ENCODE measurements at regions of chr4 and their contacts with region 1.

Region 1: GRCh38 chr4:185358514-185358913 is 37.2 kb downstream of the LRP2BP start:
- DNase-seq: peak; percentile 27
- H3K4me3 ChIP-seq: no peak overlapping the region
- CTCF ChIP-seq: no peak

Region 2: DNA sequence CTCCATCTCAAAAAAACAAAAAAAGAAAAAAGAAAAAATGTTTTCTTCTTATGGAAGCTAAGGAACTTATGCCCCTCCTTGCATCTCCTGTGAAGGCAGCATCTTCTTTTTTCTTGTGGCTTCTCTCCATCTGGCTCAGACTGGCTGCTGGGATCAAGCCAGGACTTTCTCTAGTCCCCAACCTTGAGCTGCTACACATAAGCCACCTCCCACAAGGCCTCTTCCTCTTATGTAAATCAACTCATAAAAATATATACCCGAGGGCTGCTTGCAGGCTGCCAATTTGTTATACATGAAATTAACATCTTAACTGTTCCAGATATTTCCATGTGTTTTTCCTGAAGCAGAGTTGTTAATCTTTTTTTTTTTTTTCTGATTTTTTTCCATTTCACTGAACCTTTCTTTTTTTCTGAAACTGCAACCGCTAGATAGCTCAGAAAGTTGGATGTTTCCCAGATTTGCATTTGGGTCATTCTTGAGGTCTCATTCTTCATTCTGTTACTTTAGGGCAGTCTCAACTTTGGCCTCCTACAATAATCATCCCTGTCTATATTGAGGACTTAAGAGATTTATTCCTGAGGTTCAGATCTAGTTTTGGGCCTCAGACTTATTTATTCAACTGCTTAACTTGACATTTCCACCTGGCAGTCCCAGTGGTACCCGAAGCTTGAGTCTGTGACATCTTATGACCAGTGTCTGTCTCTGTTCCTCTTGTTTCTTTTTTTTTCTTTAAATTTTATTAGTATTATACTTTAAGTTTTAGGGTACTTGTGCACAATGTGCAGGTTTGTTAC is 138.8 kb before region 1 on chr4:
- in situ Hi-C with region 1: loop called (anchors 10 kb)
- DNase-seq: peak; percentile 76
- H3K4me3 ChIP-seq: no peak overlapping the region
- CTCF ChIP-seq: no peak

Region 3: DNA sequence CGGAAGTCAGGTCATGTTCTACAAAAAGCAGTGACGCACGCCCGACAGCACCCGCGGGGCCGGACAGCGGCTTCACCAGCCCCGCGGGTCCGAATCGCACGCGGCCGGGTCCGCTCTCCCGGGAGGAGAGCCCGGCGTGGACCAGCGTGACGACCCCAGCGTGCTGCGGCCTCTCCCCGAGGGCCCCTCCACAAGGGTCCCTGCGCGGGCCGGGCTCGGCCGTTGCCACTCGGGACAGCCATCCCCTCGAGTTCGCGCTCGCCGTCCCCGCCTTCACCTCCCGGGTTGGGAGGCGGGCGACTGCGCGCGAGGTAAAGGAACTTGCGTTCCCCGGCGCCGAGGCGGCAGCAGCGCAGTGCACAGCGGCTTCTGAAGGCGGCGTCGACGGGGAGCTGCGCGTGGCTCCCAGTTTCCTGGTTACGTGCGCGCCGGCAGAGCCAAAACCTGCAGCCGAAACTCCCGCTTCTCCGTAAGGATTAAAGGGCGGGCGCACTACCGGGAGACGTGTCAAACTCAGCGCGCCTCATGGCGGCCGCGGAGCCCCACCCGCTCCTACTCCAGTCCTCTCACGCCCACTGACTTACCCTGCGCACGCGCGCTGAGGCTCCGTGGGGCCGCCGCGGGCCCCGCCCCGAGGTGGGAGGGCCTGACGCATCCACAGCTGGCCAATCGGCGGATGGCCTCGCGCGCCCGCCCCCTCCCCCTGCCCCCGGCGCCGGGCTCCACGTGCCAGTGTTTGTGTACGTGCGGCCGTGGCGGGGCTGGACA is 37.6 kb after region 1 on chr4:
- in situ Hi-C with region 1: loop called (anchors 5 kb)
- DNase-seq: peak; percentile 91
- H3K4me3 ChIP-seq: peak overlapping the region; percentile 55
- CTCF ChIP-seq: no peak

Region 4: DNA sequence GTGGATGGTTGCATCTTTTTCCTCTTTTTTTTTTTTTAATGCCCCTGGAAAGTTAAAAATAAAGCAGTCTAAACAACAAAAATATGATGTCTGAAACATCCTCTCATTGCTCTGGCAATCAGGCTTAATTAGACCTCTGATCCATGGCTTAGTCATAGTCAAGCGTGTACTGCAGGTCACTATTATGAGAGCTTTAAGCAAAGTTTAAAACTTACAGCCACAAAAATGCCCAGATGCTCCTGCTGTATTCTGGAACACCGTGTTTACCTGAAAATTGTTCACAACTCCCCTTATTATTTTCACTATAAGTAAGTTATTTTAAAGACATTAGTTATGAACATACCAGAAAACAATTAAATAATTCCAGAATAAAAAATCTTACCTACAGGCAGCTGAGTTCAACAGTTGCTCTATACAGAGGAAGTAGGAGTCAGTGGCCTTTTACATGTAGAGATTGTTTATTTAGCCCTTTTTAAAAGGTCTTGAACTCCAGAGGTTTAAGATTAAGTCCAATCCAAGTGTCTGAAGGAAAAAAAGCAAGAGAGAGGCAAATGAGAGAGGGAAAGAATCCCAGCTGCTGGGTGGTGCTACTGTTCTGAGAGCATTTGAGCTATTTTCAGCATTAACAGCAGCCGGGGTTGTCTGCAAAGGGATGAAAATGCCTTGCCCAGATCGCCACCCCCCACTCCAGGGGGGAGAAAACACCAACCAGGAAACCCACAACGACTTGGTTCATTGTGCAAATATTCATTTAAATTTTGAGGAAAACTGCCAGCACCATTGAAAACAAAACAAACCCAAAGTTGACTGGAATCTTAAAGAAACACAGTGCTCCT is 416.5 kb after region 1 on chr4:
- in situ Hi-C with region 1: no loop called
- DNase-seq: peak; percentile 86
- H3K4me3 ChIP-seq: peak overlapping the region; percentile 27
- CTCF ChIP-seq: no peak